Calu3 (cell line): ENCODE measurements at regions of chr4 and their contacts with region 1.

Region 1: GRCh38 chr4:74189331-74190043 is 31.6 kb downstream of the MTHFD2L start:
- DNase-seq: no peak
- H3K4me3 Mint-ChIP-seq: no peak overlapping the region
- H3K27ac Mint-ChIP-seq: no peak overlapping the region
- H3K4me1 Mint-ChIP-seq: no peaks in the 10 kb centered on the region
- H3K27me3 Mint-ChIP-seq: no peaks in the 10 kb centered on the region
- CTCF ChIP-seq: peak; percentile 48

Region 2: DNA sequence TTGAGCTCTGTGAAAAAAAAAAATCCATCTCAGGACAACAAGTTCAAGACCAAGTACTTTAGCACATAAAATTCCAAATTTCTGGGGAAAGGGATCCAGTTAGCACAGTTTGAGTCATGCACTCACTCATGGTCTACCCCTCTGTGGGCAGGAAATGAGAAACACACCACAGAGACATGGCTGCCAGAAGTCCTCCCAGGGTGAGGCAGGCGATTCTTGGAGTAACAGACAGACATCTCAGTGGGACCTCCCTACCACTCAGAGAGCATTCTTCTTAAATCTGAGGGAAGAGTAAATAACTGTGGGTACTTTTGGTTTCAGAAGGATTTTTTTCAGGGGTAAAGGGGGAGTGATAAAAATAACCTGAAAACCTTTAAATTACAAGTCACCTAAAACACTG is 306.2 kb before region 1 on chr4:
- CTCF ChIA-PET with region 1: no interaction called
- intact Hi-C with region 1: no loop called
- DNase-seq: no peak
- H3K4me3 Mint-ChIP-seq: no peak overlapping the region
- H3K27ac Mint-ChIP-seq: no peak overlapping the region
- H3K4me1 Mint-ChIP-seq: no peaks in the 10 kb centered on the region
- H3K27me3 Mint-ChIP-seq: no peaks in the 10 kb centered on the region
- CTCF ChIP-seq: no peak

Region 3: DNA sequence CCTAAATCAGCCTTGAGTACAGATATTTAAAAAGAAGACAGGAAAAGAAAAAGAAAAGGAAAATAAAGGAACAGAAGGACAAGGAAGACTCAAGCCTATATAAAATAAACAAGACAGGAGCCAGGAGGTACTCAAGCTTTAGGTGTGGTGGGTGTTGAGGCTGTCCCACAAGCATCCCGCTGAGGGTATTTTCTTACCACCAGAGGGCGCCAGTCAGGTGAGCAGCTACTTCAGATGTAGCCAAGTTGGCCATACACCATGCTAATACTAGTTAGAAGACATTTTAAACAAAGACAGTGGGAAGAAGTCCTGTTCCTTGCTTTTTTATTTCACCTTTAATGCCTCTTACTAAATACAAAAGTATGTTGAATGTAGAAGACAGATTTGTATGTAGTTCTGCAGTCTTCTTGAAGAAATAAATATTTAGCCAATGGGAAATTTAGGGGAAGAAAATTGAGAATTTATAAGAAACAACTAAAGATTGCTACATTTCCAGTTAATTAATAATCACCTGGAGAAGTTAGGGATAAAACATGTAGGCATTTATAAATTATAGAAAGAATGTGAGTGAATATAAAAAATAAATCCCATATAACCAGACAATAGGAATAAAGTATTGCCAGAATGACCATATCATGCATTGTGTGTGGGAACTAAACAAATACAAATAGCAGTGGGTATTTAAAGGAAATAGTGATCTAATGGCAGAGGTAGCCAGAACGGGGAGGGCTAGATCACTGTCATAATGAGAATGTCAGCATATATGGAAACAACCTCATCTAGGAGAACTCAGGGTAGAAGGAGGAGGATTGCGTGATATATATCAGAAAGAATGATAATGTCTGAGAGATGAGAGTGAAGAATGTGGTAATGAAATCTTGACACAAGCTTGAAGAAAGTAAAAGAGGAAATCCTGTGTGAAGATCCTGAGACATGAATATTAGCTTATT is 39.5 kb after region 1 on chr4:
- CTCF ChIA-PET with region 1: interaction called, 4 read pairs
- intact Hi-C with region 1: loop called (anchors 2 kb)
- DNase-seq: peak; percentile 78
- H3K4me3 Mint-ChIP-seq: no peak overlapping the region
- H3K27ac Mint-ChIP-seq: no peak overlapping the region
- H3K4me1 Mint-ChIP-seq: peaks cover 27% of the 10 kb centered on the region
- H3K27me3 Mint-ChIP-seq: no peaks in the 10 kb centered on the region
- CTCF ChIP-seq: peak; percentile 79